Activated T-helper 1 cell treated with anti-CD3 and anti-CD28 coated beads, Interleukin-12 subunit alpha, Interleukin-12 subunit beta, Interleukin-2, Interleukin-4 antibody, amounts not matched to agents 30 ng/mL and 10 ng/mL and 1 ng/mL, durations not matched to agents 14 hours and 24 hours and 36 hours (primary cell): ENCODE measurements at regions of chr2 and their contacts with region 1.

Region 1: GRCh38 chr2:27903649-27904404 is 13.3 kb downstream of the BABAM2 start:
- DNase-seq: no peak
- H3K4me3 Mint-ChIP-seq: no peak overlapping the region
- H3K27ac Mint-ChIP-seq: peak overlapping the region; percentile 21
- H3K4me1 Mint-ChIP-seq: peaks cover 54% of the 10 kb centered on the region
- H3K27me3 Mint-ChIP-seq: no peaks in the 10 kb centered on the region

Region 2: DNA sequence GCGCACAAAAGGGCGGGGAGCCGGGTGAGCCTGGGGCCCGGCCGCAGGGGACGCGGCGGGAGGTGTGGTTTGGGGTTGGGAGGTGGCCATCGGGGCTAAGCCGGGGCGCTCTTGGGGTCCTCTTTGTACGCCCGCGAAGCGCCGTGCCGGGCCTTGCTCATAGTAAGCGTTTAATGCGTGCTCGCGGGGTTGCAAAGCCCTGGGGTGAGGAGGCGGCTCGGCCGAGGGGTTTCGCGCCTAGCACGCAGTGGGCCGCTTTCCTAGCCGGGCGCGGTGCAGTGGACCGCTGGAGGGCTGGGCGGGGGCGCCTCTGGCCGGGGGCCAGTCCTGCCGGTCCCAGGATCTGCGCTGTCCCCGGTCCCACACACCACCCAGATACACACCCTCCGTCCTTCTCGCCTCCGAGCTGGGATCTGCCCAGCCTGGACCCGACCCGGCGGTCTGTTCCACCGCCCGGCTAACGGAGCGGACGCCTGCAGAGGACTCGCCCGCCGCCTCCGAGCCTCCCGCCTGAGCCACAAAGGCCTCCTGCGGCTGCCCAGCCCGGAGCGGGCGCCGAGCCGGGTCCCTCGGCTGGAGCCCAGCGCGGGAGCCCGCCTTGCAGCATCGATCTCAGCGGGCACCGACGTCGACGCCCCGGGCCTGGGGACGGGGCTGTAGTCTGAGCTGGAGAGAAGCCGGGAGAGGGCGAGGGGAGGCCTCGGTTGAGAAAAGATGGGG is 1055.3 kb before region 1 on chr2:
- intact Hi-C with region 1: no loop called
- DNase-seq: no peak
- H3K4me3 Mint-ChIP-seq: peak overlapping the region; percentile 53
- H3K27ac Mint-ChIP-seq: no peak overlapping the region
- H3K4me1 Mint-ChIP-seq: no peaks in the 10 kb centered on the region
- H3K27me3 Mint-ChIP-seq: peaks cover 65% of the 10 kb centered on the region

Region 3: GRCh38 chr2:28356095-28356911 is 452.5 kb after region 1 on chr2:
- intact Hi-C with region 1: no loop called
- DNase-seq: no peak
- H3K4me3 Mint-ChIP-seq: no peak overlapping the region
- H3K27ac Mint-ChIP-seq: no peak overlapping the region
- H3K4me1 Mint-ChIP-seq: peaks cover 22% of the 10 kb centered on the region
- H3K27me3 Mint-ChIP-seq: peaks cover 8% of the 10 kb centered on the region

Region 4: DNA sequence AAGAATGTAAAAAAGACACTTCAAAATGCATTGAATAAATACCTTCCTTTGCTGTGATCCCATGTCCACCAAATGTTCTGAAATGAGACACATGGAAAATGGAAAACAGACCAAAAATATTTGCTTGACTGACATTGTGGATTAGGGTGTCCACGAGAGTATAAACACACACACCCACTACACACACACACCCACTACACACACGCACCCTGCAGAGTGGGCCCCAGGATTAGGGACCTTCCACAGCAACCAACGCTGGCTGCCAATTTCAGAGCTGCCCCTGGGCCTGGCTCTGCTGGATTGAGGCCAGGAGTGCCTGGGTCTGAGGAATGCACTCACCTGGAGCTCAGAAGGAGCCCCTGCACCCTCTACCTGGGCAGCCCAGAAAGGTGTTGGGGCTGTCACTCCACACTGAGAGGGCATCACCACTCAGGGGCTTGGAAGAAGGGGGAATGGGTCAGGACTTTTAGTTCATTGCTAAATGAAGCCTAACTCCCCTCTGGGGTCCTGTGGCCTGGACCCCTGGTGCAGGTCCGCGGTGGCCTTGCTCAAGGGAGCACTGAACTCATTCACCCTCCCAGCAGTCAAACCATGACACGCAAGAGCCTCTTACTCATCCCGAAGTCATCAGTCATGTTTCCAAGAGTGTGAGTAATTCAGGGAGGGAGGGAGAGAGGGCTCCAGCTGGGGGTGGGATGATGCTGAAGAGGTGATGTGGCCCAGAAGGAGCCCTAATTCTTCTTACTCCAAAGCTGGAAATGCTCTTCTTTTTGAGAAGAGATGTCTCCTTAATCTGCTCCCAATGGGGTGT is 541.8 kb after region 1 on chr2:
- intact Hi-C with region 1: loop called (anchors 5 kb)
- DNase-seq: no peak
- H3K4me3 Mint-ChIP-seq: peak overlapping the region; percentile 40
- H3K27ac Mint-ChIP-seq: peak overlapping the region; percentile 82
- H3K4me1 Mint-ChIP-seq: peaks cover 78% of the 10 kb centered on the region
- H3K27me3 Mint-ChIP-seq: no peaks in the 10 kb centered on the region